Activated naive CD4-positive, alpha-beta T cell treated with anti-CD3 and anti-CD28 coated beads for 36 hours (primary cell): ENCODE measurements at regions of chr7 and their contacts with region 1.

Region 1: DNA sequence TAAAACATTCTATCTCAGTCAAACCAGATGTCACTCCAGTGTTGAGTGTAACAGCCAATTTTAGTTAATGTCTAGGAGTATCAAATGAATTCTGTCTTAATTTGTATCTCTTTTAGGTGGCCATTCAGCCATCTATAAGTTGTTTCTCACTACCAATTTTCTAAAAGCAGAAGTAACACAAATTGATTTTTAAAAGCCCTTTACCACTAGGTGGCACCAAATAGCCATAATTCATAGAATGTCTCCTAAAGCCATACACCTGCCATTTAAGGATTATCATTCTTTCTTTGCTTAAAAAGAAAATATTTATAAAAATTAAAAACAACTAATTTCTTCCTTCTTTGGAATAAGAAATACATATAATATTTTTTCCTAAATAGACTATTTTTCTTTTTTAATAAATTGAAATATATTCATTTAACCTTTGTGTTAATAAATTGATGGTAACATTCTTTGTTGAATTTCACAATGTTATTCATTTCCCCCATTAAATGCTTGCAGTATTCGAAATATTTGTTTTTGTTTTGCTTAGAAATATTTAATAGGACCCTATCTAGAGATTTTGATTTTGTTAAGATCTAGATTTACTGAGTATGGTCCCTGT is 107.8 kb upstream of the PPP1R3A start:
- DNase-seq: no peak
- H3K4me3 Mint-ChIP-seq: no peak overlapping the region
- H3K27ac Mint-ChIP-seq: no peak overlapping the region
- H3K4me1 Mint-ChIP-seq: no peaks in the 10 kb centered on the region
- H3K27me3 Mint-ChIP-seq: peaks cover 2% of the 10 kb centered on the region

Region 2: DNA sequence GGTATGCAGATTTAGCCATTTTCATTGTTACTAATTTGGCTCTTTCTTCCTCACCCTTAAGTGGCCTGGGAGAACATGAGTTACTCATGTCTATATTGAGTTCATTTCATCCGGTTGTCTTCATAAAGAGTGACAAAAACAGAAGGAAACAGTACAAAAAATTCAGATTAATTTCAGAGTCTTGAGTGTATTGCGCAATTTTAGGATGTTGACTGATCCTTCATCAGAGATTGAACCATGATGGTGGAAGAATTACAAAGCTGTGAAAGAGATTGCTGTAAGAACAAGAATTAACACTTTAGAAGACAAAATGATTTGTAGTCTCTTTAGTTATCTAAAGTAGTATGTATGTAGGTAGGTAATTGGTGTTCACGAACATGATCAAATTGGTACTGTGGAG is 86.2 kb after region 1 on chr7:
- CTCF ChIA-PET with region 1: no interaction called
- intact Hi-C with region 1: no loop called
- DNase-seq: no peak
- H3K4me3 Mint-ChIP-seq: no peak overlapping the region
- H3K27ac Mint-ChIP-seq: no peak overlapping the region
- H3K4me1 Mint-ChIP-seq: no peaks in the 10 kb centered on the region
- H3K27me3 Mint-ChIP-seq: peaks cover 4% of the 10 kb centered on the region

Region 3: GRCh38 chr7:114217026-114217425 is 190.4 kb after region 1 on chr7:
- CTCF ChIA-PET with region 1: no interaction called
- intact Hi-C with region 1: loop called (anchors 5 kb)
- DNase-seq: no peak
- H3K4me3 Mint-ChIP-seq: no peak overlapping the region
- H3K27ac Mint-ChIP-seq: no peak overlapping the region
- H3K4me1 Mint-ChIP-seq: no peaks in the 10 kb centered on the region
- H3K27me3 Mint-ChIP-seq: no peaks in the 10 kb centered on the region

Region 4: DNA sequence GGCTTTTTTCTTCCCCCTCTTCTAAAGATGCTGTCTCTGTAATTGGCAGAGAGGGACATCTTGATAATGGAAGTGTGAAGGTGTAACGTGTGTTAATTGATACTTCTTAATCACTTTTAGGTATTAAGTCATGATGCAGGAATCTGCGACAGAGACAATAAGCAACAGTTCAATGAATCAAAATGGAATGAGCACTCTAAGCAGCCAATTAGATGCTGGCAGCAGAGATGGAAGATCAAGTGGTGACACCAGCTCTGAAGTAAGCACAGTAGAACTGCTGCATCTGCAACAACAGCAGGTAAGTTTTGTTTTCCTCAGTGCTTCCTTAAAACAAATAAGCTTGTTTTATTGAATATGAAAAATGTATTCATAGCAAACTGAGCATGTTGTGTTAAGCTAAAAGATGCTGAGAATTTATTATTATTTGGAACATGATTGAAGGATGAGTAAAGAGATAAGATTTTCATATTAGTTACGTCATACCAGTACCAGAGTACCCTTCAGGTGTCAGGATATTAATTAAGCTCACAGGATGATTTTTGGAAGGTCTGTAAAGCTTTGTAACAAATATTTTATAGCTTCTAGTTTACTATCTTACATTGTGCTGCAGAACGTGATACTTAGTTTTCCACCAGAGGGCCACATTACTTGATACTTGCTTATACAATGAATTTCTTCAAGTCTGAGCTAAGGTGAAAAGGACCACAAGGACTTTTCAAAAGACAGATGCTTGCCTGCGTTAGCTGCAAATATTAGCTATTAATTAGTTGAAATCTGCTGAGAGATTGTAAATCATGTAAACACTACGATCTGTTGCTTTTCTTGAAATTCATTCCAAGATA is 400.0 kb after region 1 on chr7:
- CTCF ChIA-PET with region 1: no interaction called
- intact Hi-C with region 1: loop called (anchors 10 kb)
- DNase-seq: no peak
- H3K4me3 Mint-ChIP-seq: no peak overlapping the region
- H3K27ac Mint-ChIP-seq: no peak overlapping the region
- H3K4me1 Mint-ChIP-seq: no peaks in the 10 kb centered on the region
- H3K27me3 Mint-ChIP-seq: no peaks in the 10 kb centered on the region

Region 5: GRCh38 chr7:114663502-114663901 is 636.9 kb after region 1 on chr7:
- CTCF ChIA-PET with region 1: no interaction called
- intact Hi-C with region 1: loop called (anchors 10 kb)
- DNase-seq: peak; percentile 7
- H3K4me3 Mint-ChIP-seq: no peak overlapping the region
- H3K27ac Mint-ChIP-seq: no peak overlapping the region
- H3K4me1 Mint-ChIP-seq: no peaks in the 10 kb centered on the region
- H3K27me3 Mint-ChIP-seq: peaks cover 6% of the 10 kb centered on the region

Region 6: DNA sequence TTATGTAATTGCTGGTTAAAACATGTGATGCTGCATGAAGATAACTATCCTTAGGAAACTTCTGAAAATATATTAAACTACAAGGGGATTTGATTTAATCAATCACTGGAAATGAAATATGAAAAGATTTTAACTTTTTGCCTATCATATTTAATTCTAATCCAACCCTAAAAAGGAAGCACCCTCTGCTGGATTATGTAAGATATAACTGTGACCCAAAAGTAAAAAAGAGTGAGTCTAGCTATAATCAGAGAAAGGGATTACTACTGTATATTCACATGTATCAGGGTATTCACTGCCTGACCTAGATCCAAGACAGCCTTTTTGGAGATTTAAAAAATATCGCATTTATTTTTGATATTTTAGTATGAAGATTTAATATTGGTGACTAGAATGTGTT is 1190.8 kb after region 1 on chr7:
- CTCF ChIA-PET with region 1: no interaction called
- intact Hi-C with region 1: loop called (anchors 5 kb)
- DNase-seq: no peak
- H3K4me3 Mint-ChIP-seq: no peak overlapping the region
- H3K27ac Mint-ChIP-seq: no peak overlapping the region
- H3K4me1 Mint-ChIP-seq: peaks cover 10% of the 10 kb centered on the region
- H3K27me3 Mint-ChIP-seq: no peaks in the 10 kb centered on the region

Region 7: DNA sequence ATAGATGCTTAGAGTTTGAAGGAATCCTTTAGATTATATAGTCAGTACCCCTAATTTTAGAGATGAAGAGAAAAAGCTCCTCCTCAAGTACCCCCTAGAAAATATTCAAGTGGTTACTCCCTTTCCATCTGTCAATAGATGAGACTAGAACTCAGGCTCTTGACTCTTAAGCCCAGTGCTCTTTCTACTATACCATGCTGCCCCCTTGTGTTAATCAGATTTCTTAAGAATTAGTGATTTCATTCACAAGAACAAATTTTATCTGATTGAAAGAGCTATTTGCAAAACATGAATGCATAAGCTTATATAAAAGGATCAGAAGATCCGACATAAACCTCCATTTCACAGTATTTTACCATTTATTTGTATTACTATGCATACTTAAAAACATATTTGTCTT is 1824.7 kb after region 1 on chr7:
- CTCF ChIA-PET with region 1: interaction called, 3 read pairs
- intact Hi-C with region 1: loop called (anchors 1 kb)
- DNase-seq: no peak
- H3K4me3 Mint-ChIP-seq: no peak overlapping the region
- H3K27ac Mint-ChIP-seq: no peak overlapping the region
- H3K4me1 Mint-ChIP-seq: no peaks in the 10 kb centered on the region
- H3K27me3 Mint-ChIP-seq: no peaks in the 10 kb centered on the region

Region 8: GRCh38 chr7:115910541-115911164 is 1884.1 kb after region 1 on chr7:
- CTCF ChIA-PET with region 1: no interaction called
- intact Hi-C with region 1: loop called (anchors 1 kb)
- DNase-seq: no peak
- H3K4me3 Mint-ChIP-seq: no peak overlapping the region
- H3K27ac Mint-ChIP-seq: no peak overlapping the region
- H3K4me1 Mint-ChIP-seq: no peaks in the 10 kb centered on the region
- H3K27me3 Mint-ChIP-seq: peaks cover 8% of the 10 kb centered on the region